CD4-positive, alpha-beta memory T cell (primary cell): ENCODE measurements at regions of chr11 and their contacts with region 1.

Region 1: DNA sequence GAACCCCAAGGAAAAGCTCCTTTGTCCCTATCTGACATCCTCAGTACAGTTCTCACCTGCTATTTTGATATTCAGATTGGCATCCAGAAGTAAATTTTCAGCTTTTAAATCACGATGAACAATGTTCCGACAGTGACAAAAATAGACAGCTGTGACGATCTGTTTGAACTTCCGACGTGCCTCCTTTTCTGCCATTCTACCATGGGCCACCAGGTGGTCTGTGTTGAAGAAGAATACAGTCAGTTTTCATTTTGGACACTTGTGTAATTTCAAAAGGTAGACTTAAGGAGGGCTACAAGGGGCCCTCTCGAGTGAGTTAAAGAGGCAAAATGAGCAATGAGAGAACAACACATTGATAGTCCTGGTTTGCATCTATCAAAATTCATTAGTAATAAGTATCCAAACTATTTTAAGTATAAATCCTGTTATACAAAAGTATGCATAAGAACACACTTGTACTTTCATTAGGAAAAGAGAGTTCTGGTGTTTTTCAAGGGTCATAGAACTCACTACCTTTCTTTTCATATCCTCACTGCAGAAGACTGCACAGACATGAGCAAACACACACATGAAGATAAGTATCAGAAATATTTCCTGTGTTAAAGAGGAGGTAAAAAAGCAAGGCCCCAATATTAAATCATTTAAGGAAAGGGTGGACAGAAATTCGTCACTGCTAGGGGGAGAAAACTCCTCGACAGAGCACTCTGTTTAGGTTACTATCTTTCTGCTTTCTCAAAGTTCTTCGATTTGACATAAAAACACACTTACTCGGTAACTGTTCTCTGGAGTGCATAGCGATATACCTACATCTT is 89.9 kb upstream of the APOA1 start:
- DNase-seq: peak; percentile 45 to 78 (median 57)
- H3K4me3 ChIP-seq: peak overlapping the region in 1 of 2 donors; percentile 24
- H3K4me3 Mint-ChIP-seq: peak overlapping the region; percentile 47 to 88 (median 74)
- H3K27ac ChIP-seq: peak overlapping the region; percentile 87
- H3K27ac Mint-ChIP-seq: peak overlapping the region; percentile 92 to 99 (median 97)
- H3K4me1 ChIP-seq: peaks cover 93% of the 10 kb centered on the region
- H3K4me1 Mint-ChIP-seq: peaks cover 64 to 91% (median 76%) of the 10 kb centered on the region in 4 donors
- H3K27me3 ChIP-seq: no peaks in the 10 kb centered on the region
- H3K27me3 Mint-ChIP-seq: no peaks in the 10 kb centered on the region

Region 2: GRCh38 chr11:116879800-116880625 is 47.4 kb before region 1 on chr11:
- CTCF ChIA-PET with region 1: interaction called, 16 read pairs
- POLR2A ChIA-PET with region 1: no interaction called
- intact Hi-C with region 1: no loop called
- DNase-seq: peak; percentile 39 to 56 (median 50)
- H3K4me3 ChIP-seq: no peak overlapping the region
- H3K4me3 Mint-ChIP-seq: no peak overlapping the region
- H3K27ac ChIP-seq: no peak overlapping the region
- H3K27ac Mint-ChIP-seq: peak overlapping the region; percentile 35 to 79 (median 64)
- H3K4me1 ChIP-seq: no peaks in the 10 kb centered on the region
- H3K4me1 Mint-ChIP-seq: peaks cover 10 to 12% (median 11%) of the 10 kb centered on the region in 4 donors
- H3K27me3 ChIP-seq: no peaks in the 10 kb centered on the region
- H3K27me3 Mint-ChIP-seq: no peaks in the 10 kb centered on the region

Region 3: GRCh38 chr11:116913000-116913399 is 14.4 kb before region 1 on chr11:
- CTCF ChIA-PET with region 1: interaction called, 7 read pairs
- POLR2A ChIA-PET with region 1: interaction called, 3 read pairs
- intact Hi-C with region 1: loop called (anchors 2 kb)
- DNase-seq: no peak
- H3K4me3 ChIP-seq: no peak overlapping the region
- H3K4me3 Mint-ChIP-seq: no peak overlapping the region
- H3K27ac ChIP-seq: no peak overlapping the region
- H3K27ac Mint-ChIP-seq: peak overlapping the region in 1 of 7 donors; percentile 59
- H3K4me1 ChIP-seq: peaks cover 8% of the 10 kb centered on the region
- H3K4me1 Mint-ChIP-seq: peaks cover 20 to 52% (median 31%) of the 10 kb centered on the region in 4 donors
- H3K27me3 ChIP-seq: no peaks in the 10 kb centered on the region
- H3K27me3 Mint-ChIP-seq: no peaks in the 10 kb centered on the region

Region 4: GRCh38 chr11:116958246-116958645 is 30.9 kb after region 1 on chr11:
- CTCF ChIA-PET with region 1: interaction called, 10 read pairs
- POLR2A ChIA-PET with region 1: interaction called, 21 read pairs
- intact Hi-C with region 1: loop called (anchors 2 kb)
- DNase-seq: no peak
- H3K4me3 ChIP-seq: no peak overlapping the region
- H3K4me3 Mint-ChIP-seq: peak overlapping the region in 2 of 8 donors; percentile 3 to 27
- H3K27ac ChIP-seq: no peak overlapping the region
- H3K27ac Mint-ChIP-seq: peak overlapping the region; percentile 7 to 80 (median 66)
- H3K4me1 ChIP-seq: peaks cover 66% of the 10 kb centered on the region
- H3K4me1 Mint-ChIP-seq: peaks cover 46 to 88% (median 67%) of the 10 kb centered on the region in 4 donors
- H3K27me3 ChIP-seq: no peaks in the 10 kb centered on the region
- H3K27me3 Mint-ChIP-seq: no peaks in the 10 kb centered on the region

Region 5: GRCh38 chr11:116976941-116977570 is 49.7 kb after region 1 on chr11:
- CTCF ChIA-PET with region 1: no interaction called
- POLR2A ChIA-PET with region 1: no interaction called
- intact Hi-C with region 1: no loop called
- DNase-seq: no peak
- H3K4me3 ChIP-seq: no peak overlapping the region
- H3K4me3 Mint-ChIP-seq: no peak overlapping the region
- H3K27ac ChIP-seq: no peak overlapping the region
- H3K27ac Mint-ChIP-seq: peak overlapping the region in 1 of 7 donors; percentile 35
- H3K4me1 ChIP-seq: no peaks in the 10 kb centered on the region
- H3K4me1 Mint-ChIP-seq: peaks cover 27 to 66% (median 48%) of the 10 kb centered on the region in 4 donors
- H3K27me3 ChIP-seq: no peaks in the 10 kb centered on the region
- H3K27me3 Mint-ChIP-seq: no peaks in the 10 kb centered on the region

Region 6: GRCh38 chr11:117232092-117232878 is 304.9 kb after region 1 on chr11 and contains the start of gene RNF214:
- CTCF ChIA-PET with region 1: no interaction called
- POLR2A ChIA-PET with region 1: no interaction called
- intact Hi-C with region 1: loop called (anchors 5 kb)
- DNase-seq: peak; percentile 65 to 83 (median 75)
- H3K4me3 ChIP-seq: peak within 1 kb of the TSS; percentile 87 to 93
- H3K4me3 Mint-ChIP-seq: peak within 1 kb of the TSS; percentile 97 to 100 (median 99)
- H3K27ac ChIP-seq: peak within 1 kb of the TSS; percentile 90
- H3K27ac Mint-ChIP-seq: peak within 1 kb of the TSS; percentile 95 to 100 (median 99)
- H3K4me1 ChIP-seq: peaks cover 47% of the 10 kb centered on the region
- H3K4me1 Mint-ChIP-seq: peaks cover 27 to 62% (median 49%) of the 10 kb centered on the region in 4 donors
- H3K27me3 ChIP-seq: no peaks in the 10 kb centered on the region
- H3K27me3 Mint-ChIP-seq: no peaks in the 10 kb centered on the region
- total RNA-seq, gene RNF214: 41.8 to 50.1 TPM